ENCODE measurements at regions of chr16 and their contacts with region 1.

Region 1: GRCh38 chr16:3123986-3124886 is 10.6 kb upstream of the ZNF213 start:
- DNase-seq: peak; percentile 74
- H3K4me3 ChIP-seq: peak overlapping the region; percentile 85
- H3K27ac ChIP-seq: peak overlapping the region; percentile 68
- H3K27me3 ChIP-seq: no peaks in the 10 kb centered on the region
- CTCF ChIP-seq: peak; percentile 31

Region 2: DNA sequence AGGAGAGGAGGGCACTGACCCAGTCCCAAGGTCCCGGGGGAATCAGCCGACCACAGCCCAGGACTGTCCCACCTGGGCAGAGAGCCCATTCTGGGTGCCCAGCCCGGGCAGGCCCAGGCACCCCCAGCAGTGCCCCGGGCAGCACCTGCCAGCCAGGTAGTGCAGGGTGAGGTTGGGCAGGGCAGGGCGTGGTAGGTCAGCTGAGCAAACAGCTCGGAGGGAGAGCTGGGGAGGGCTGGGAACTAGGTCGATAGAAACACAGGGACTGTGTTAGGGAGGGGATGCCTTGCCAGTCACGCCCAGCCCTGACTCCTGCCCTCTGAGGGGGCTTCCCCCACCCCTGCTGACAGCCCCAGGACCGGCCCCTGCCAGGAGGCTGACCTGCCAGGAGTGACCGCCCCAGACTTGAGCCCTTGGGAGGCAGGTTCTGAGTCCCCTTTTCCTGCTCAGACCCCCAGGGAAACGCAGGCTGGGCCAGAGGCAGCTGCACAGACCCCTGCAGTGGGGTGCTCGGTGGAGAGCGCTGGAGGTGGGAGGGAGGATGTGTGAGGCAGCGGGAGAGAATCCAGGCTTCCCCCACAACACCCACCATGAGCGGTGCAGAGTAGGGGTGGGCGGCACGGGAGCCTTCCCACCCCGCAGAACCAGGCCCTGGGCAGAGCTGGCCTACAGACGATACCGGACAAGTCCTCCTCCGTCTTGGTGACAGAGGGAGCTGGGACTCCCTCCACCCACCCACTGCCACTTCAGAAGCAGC is 1210.7 kb before region 1 on chr16:
- CTCF ChIA-PET with region 1: no interaction called
- POLR2A ChIA-PET with region 1: no interaction called
- DNase-seq: no peak
- H3K4me3 ChIP-seq: no peak overlapping the region
- H3K27ac ChIP-seq: no peak overlapping the region
- H3K27me3 ChIP-seq: peaks cover 62% of the 10 kb centered on the region
- CTCF ChIP-seq: no peak

Region 3: DNA sequence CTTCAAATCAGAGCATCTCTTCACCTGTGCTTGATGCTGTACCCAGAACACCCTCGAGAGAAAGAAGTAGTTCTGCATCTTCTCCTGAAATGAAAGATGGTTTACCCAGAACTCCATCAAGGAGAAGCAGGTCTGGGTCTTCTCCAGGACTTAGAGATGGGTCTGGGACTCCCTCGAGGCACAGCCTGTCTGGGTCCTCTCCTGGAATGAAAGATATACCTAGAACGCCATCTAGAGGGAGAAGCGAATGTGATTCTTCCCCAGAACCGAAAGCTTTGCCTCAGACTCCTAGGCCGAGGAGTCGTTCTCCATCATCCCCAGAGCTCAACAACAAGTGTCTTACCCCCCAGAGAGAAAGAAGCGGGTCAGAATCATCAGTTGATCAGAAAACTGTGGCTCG is 359.5 kb before region 1 on chr16:
- CTCF ChIA-PET with region 1: no interaction called
- POLR2A ChIA-PET with region 1: no interaction called
- DNase-seq: no peak
- H3K4me3 ChIP-seq: no peak overlapping the region
- H3K27ac ChIP-seq: no peak overlapping the region
- H3K27me3 ChIP-seq: no peaks in the 10 kb centered on the region
- CTCF ChIP-seq: no peak

Region 4: GRCh38 chr16:3059000-3059722 is 65.1 kb before region 1 on chr16:
- CTCF ChIA-PET with region 1: interaction called, 57 read pairs
- POLR2A ChIA-PET with region 1: no interaction called
- DNase-seq: peak; percentile 33
- H3K4me3 ChIP-seq: peak overlapping the region; percentile 79
- H3K27ac ChIP-seq: peak overlapping the region; percentile 57
- H3K27me3 ChIP-seq: no peaks in the 10 kb centered on the region
- CTCF ChIP-seq: peak; percentile 61

Measured in AG04450 (cell line).